Calu3 (cell line): ENCODE measurements at regions of chr2 and their contacts with region 1.

Region 1: DNA sequence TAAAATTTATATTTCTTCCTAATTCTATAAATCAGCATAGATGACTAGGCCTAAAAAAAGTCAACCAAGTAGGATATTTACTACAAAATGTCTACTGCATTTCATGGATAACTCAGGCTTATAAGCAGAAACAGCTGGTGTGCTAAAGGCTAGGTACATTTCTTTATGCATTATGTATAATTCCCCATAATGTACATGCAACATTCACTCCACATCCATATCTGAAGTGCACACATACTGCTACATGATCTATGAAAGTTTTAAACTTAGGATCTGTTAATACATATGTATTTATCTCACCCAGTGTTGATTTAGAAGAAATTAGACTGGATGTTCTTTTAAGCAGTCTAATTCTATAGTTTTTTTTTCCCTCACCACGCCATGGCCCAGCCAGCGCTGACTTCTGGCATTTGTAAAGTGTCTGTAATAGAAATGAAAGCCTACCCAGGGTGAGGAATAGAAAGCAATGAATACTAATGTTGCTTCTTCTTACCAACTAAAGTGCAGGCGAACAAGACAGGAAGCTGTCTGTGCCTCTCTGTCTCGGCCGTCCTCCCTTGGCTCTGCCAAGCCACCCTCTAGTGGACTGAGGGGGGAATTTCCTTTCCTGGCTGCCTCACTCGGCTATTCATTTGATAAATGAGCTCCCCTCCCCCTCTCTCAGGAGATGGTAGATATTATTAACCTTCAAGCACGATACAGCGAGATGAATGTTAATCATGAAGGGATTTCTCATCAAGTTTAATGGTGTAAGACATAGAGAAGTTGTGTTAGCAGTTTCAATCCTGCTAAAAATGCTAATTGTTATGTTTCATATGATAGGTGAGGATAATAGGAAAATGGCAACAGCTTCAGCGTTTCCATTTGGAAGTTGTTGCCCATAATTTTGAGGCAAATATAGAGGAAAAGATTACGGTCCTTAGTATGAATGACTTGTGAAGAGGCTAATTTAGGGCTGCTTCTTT is 384.5 kb downstream of the MTX2 start:
- DNase-seq: peak; percentile 75
- H3K4me3 Mint-ChIP-seq: no peak overlapping the region
- H3K27ac Mint-ChIP-seq: no peak overlapping the region
- H3K4me1 Mint-ChIP-seq: no peaks in the 10 kb centered on the region
- H3K27me3 Mint-ChIP-seq: peaks cover 31% of the 10 kb centered on the region
- CTCF ChIP-seq: peak; percentile 82

Region 2: DNA sequence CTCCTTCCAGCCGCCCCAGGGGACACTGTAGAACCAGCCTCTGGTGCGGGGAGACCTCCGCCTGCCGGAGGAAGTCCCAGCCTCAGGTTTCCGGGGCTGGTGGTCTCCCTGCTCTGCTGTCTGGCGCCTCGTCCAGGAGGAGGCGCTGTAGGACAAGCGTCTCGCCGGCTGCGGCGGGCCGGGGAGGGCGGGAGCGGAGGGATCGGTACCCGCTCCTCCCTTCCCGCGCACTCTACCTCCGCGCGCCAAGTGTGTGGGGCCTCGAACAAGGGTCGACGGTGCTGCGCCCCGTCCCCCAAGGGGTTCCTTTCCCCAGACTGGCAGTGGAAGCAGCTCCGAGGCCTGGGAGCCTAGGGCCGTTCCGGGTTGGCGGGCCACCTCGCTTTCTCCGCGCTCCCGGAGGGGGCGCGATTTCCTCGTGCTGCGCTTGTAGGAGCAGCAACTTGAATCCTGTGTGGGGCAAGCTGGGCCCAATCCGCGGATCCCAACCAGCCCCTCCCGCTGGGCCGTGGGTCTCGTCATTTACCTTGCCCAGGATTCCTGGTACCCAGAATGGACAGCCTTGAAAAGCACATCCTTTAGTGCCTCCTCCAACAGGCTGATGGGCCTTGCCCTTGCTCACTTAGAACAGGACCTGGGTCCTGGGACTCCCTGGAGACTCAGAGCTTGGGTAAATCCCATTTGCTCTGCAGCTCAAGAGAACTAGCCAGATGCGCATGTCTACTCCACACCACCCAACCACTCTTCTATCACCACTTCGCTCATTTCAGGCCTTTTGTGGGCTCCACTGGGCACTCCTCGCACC is 513.0 kb before region 1 on chr2:
- CTCF ChIA-PET with region 1: interaction called, 19 read pairs
- intact Hi-C with region 1: loop called (anchors 2 kb)
- DNase-seq: peak; percentile 89
- H3K4me3 Mint-ChIP-seq: peak overlapping the region; percentile 70
- H3K27ac Mint-ChIP-seq: no peak overlapping the region
- H3K4me1 Mint-ChIP-seq: no peaks in the 10 kb centered on the region
- H3K27me3 Mint-ChIP-seq: peaks cover 6% of the 10 kb centered on the region
- CTCF ChIP-seq: peak; percentile 99

Region 3: DNA sequence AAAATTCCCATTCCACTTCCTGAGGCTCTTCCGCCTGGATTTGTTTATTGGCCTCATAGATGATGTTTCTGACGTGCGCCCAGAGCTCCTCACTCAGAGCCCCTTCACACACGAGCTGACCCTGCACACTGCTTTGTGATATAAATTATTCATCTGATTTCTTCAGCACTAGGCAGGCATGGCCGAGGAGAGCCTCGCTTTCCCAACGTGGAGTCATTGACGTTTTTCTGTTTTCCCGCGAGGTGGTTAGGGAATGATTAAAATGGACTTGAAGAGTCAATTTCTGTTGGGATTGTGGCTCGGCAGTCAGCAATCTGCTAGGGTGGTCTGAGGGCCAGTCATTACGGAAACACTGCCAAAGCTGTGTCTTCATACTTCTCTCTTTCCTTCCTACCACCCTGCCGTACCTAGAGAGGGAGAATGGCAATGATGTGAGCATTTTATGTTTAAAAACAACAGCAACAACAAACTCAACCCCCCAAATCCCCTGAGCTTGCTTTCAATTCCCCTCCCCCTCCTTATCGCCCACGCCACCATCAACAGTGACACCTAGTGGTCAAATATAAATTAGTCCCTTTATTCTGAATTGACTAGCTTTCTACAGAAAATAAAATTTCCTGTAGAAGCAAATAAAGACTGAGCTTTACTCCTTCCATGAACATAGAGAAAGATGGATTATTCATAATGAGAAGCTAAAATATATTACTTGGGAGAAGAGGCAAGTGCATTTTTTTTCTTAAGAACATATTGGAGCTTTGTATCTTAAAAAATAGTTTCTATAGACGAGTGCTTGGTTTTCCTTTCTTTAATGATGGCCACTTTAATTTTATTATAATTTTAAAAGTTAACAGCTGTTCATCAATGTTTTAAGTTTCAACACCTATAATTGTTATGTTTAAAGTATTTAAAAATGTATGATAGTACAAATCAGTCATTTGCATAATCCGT is 99.4 kb before region 1 on chr2:
- CTCF ChIA-PET with region 1: interaction called, 16 read pairs
- intact Hi-C with region 1: no loop called
- DNase-seq: peak; percentile 49
- H3K4me3 Mint-ChIP-seq: peak overlapping the region; percentile 73
- H3K27ac Mint-ChIP-seq: peak overlapping the region; percentile 64
- H3K4me1 Mint-ChIP-seq: peaks cover 17% of the 10 kb centered on the region
- H3K27me3 Mint-ChIP-seq: no peaks in the 10 kb centered on the region
- CTCF ChIP-seq: peak; percentile 48

Region 4: DNA sequence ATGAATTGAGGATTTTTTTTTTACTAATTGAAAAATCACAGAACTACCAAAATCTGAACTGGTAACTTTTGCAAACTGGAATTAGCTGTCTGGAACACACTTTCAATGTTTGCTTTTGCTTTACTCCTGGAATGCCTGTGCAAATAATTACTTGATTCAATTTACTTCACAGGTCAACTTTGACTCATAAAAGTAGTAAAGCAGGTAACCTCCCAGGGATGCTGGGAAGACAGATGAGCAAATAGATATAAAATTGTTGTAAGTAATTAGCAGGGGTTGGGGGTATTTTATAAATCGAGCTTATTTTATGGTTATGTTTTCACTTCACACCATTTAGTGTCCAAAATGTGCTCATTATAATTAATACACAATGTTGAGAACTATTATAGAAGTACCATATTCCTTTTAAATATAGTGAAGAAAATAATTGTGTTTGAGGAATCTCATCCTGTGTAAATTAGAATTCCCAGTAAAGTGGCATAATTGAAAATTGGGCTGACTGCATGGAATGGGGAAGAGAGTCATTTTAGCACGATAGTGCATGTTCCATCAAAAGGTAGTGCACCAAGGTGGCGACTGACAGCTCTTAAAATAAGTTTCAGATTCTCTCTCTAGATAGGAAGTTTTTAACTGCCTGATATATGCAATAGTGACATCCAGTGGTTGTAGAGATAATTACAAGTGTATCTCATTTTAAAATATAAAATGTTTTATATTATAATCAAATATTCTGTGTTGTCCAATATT is 160.7 kb after region 1 on chr2:
- CTCF ChIA-PET with region 1: interaction called, 13 read pairs
- intact Hi-C with region 1: loop called (anchors 2 kb)
- DNase-seq: no peak
- H3K4me3 Mint-ChIP-seq: no peak overlapping the region
- H3K27ac Mint-ChIP-seq: no peak overlapping the region
- H3K4me1 Mint-ChIP-seq: no peaks in the 10 kb centered on the region
- H3K27me3 Mint-ChIP-seq: no peaks in the 10 kb centered on the region
- CTCF ChIP-seq: peak; percentile 39

Region 5: DNA sequence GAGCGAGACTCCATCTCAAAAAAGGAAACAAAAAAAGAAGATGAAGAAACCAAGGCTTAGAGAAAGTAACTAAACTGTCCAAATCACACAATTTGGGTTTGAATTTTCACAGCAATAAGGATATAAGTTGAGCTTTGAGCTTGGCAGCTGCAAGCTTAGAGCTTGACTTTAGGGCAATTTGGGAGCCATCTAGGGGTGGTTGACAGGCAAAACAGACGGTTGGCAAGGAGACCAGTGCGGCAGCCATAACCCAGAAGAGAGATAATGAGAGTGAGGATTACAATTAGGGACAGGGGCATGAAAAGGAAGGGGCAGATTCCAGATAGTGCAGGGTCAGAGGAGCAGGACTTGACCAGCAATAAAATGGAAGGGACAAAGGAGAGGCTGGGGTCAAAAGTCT is 176.6 kb after region 1 on chr2:
- CTCF ChIA-PET with region 1: no interaction called
- intact Hi-C with region 1: no loop called
- DNase-seq: peak; percentile 8
- H3K4me3 Mint-ChIP-seq: no peak overlapping the region
- H3K27ac Mint-ChIP-seq: no peak overlapping the region
- H3K4me1 Mint-ChIP-seq: no peaks in the 10 kb centered on the region
- H3K27me3 Mint-ChIP-seq: peaks cover 68% of the 10 kb centered on the region
- CTCF ChIP-seq: peak; percentile 12